A673 (cell line): ENCODE measurements at regions of chr11 and their contacts with region 1.

Region 1: GRCh38 chr11:28697920-28698827 is 590.0 kb downstream of the METTL15 start:
- DNase-seq: peak; percentile 93
- H3K4me3 ChIP-seq: no peak overlapping the region
- H3K27ac ChIP-seq: no peak overlapping the region
- H3K4me1 ChIP-seq: peaks cover 13% of the 10 kb centered on the region
- H3K27me3 ChIP-seq: no peaks in the 10 kb centered on the region
- CTCF ChIP-seq: peak; percentile 100

Region 2: DNA sequence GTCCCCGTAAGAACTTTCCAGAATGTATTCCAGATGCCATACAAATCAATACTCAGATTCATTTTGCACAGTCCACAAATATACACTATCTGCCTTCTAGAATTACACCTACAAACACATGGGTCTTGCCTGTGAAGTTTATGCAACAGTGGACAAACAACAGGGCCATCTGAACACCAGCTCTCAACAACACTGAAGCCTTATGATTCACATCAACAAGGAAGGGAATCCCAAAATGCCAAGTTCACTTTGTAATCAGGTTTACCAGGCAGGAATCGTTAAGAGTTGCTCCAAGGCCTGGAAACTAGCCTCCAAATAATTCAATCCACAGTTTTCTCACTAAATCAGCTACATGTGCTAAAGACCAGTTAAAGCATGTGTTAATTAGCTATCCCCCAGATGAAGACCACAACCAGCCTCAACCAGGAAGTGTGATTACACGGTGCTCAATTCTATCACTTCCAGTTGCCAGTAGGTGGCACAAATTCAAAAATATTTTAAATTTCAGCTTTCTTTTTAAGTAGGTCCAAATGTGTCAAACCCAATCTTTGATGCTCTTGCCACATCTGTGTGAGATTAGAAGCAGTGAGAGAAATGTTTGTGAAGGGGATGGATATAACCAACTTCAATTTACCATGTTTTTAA is 858.8 kb before region 1 on chr11:
- CTCF ChIA-PET with region 1: no interaction called
- POLR2A ChIA-PET with region 1: no interaction called
- intact Hi-C with region 1: loop called (anchors 5 kb)
- DNase-seq: peak; percentile 79
- H3K4me3 ChIP-seq: no peak overlapping the region
- H3K27ac ChIP-seq: no peak overlapping the region
- H3K4me1 ChIP-seq: no peaks in the 10 kb centered on the region
- H3K27me3 ChIP-seq: peaks cover 57% of the 10 kb centered on the region
- CTCF ChIP-seq: peak; percentile 88

Region 3: GRCh38 chr11:28529540-28530410 is 168.4 kb before region 1 on chr11:
- CTCF ChIA-PET with region 1: no interaction called
- POLR2A ChIA-PET with region 1: no interaction called
- intact Hi-C with region 1: loop called (anchors 5 kb)
- DNase-seq: peak; percentile 89
- H3K4me3 ChIP-seq: no peak overlapping the region
- H3K27ac ChIP-seq: no peak overlapping the region
- H3K4me1 ChIP-seq: no peaks in the 10 kb centered on the region
- H3K27me3 ChIP-seq: peaks cover 38% of the 10 kb centered on the region
- CTCF ChIP-seq: peak; percentile 93

Region 4: GRCh38 chr11:28674433-28675103 is 23.6 kb before region 1 on chr11:
- CTCF ChIA-PET with region 1: no interaction called
- POLR2A ChIA-PET with region 1: no interaction called
- intact Hi-C with region 1: no loop called
- DNase-seq: peak; percentile 83
- H3K4me3 ChIP-seq: no peak overlapping the region
- H3K27ac ChIP-seq: peak overlapping the region; percentile 2
- H3K4me1 ChIP-seq: peaks cover 16% of the 10 kb centered on the region
- H3K27me3 ChIP-seq: no peaks in the 10 kb centered on the region
- CTCF ChIP-seq: peak; percentile 97

Region 5: DNA sequence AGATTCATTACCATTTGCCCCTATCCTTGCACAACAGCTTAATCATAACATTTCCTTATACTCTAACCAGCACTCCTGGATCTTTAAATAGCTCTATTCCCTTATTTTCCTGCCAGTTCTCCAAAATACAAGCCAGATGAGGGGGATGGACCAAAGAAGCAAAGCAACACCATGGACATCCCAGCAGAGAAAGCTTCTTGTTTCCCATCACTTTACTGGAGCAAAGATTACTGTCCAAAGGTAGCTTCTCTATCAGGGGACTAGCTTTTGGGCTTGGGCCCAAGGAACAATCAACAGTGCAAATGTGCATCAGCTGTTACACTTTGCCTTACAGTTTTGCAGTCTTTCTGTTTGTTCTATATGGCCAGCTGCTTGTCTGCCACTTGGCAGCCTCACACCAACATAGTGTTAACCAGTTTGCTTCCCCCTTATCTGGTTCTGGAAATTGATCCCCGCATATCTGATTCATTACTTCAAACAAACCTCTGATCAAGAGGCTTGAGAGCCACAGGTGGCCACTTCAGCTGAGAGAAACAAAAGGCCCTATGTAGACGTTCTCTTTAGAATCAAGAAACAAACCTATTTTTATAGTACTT is 224.3 kb after region 1 on chr11:
- CTCF ChIA-PET with region 1: no interaction called
- POLR2A ChIA-PET with region 1: no interaction called
- intact Hi-C with region 1: no loop called
- DNase-seq: no peak
- H3K4me3 ChIP-seq: no peak overlapping the region
- H3K27ac ChIP-seq: no peak overlapping the region
- H3K4me1 ChIP-seq: no peaks in the 10 kb centered on the region
- H3K27me3 ChIP-seq: no peaks in the 10 kb centered on the region
- CTCF ChIP-seq: no peak

Region 6: DNA sequence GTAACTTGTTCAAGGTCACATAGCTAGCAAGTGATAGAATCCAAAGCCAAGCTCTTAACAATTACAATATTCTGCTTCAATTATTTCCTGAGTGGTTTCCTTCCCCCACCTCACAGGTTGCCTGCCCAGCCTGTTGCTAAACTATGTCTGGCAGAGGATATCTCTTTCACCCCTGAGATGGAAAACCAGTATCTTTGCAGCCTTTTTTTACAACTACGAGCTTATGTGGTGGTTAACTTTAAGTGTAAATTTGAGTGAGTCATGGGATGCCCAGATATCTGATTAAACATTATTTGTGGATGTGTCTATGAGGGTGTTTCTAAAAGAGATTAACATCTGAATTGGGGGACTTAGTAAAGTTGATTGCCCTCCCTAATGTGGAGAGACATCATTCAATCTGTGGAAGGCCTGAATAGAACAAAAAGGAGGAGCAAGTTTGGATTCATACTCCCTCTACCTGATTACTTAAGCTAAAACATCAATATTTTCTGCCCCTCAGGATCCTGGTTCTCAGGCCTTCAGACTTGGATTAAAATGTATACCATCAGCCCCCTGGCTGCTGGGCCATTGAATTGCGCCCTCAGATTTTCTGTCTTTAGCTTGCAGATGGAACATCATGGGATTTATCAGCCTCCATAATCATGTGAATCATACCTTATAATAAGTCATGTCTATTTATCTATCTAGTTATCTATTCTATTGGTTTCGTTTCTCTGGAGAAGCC is 321.9 kb after region 1 on chr11:
- CTCF ChIA-PET with region 1: no interaction called
- POLR2A ChIA-PET with region 1: no interaction called
- intact Hi-C with region 1: loop called (anchors 5 kb)
- DNase-seq: peak; percentile 82
- H3K4me3 ChIP-seq: no peak overlapping the region
- H3K27ac ChIP-seq: no peak overlapping the region
- H3K4me1 ChIP-seq: no peaks in the 10 kb centered on the region
- H3K27me3 ChIP-seq: no peaks in the 10 kb centered on the region
- CTCF ChIP-seq: peak; percentile 97

Region 7: GRCh38 chr11:29328961-29329441 is 630.8 kb after region 1 on chr11:
- CTCF ChIA-PET with region 1: no interaction called
- POLR2A ChIA-PET with region 1: no interaction called
- intact Hi-C with region 1: loop called (anchors 2 kb)
- DNase-seq: peak; percentile 90
- H3K4me3 ChIP-seq: no peak overlapping the region
- H3K27ac ChIP-seq: no peak overlapping the region
- H3K4me1 ChIP-seq: no peaks in the 10 kb centered on the region
- H3K27me3 ChIP-seq: peaks cover 35% of the 10 kb centered on the region
- CTCF ChIP-seq: peak; percentile 99